GM12878 (cell line): ENCODE measurements at regions of chr22 and their contacts with region 1.

Region 1: GRCh38 chr22:37148742-37149665 is 712 bp downstream of the IL2RB start:
- DNase-seq: no peak
- ATAC-seq: peak; percentile 24
- H3K4me3 ChIP-seq: peak overlapping the region; percentile 99
- H3K27ac ChIP-seq: peak overlapping the region; percentile 94
- H3K4me1 ChIP-seq: peaks cover 31% of the 10 kb centered on the region
- H3K27me3 ChIP-seq: no peaks in the 10 kb centered on the region
- CTCF ChIP-seq: no peak
- EP300 ChIP-seq: no peak
- POLR2A ChIP-seq: no peak
- RAD21 ChIP-seq: no peak

Region 2: DNA sequence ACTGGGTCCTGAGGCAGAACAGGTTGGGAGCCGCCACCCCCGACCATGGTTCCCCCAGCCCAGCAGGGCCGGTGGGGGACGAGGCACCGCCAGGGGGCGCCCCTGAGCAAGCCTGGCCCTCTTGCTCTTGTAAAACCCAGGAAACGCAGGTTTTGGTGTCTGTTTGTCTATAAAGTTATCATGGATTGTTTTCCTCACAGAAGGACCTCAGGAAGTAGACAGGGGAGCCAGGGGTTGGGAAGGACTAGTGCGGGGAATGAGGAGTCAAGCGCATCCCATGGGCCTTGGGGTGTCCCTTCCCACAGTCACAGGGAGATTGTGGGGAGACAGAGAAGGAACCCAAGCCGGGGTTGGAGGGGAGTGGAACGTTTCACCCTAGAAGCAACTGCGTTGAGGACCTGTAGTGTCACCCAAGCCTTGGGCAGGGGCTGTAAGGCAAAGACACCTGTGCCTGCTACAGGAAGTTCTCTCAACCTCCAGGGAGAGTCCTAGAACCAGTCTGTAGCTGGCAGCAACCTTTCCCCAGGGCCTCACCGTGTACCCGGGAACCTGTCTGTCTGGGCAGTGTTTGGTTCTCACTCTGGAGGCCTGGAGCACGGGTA is 71.0 kb before region 1 on chr22:
- CTCF ChIA-PET with region 1: interaction called, 8 read pairs
- POLR2A ChIA-PET with region 1: no interaction called
- RAD21 ChIA-PET with region 1: interaction called, 7 read pairs
- SMC1A ChIA-PET with region 1: interaction called, 6 read pairs
- in situ Hi-C with region 1: no loop called
- intact Hi-C with region 1: loop called (anchors 5 kb)
- DNase-seq: no peak
- ATAC-seq: peak; percentile 91
- H3K4me3 ChIP-seq: no peak overlapping the region
- H3K27ac ChIP-seq: no peak overlapping the region
- H3K4me1 ChIP-seq: peaks cover 10% of the 10 kb centered on the region
- H3K27me3 ChIP-seq: peaks cover 0 to 3% of the 10 kb centered on the region in 2 experiments; a peak in 2 of 4 replicates
- CTCF ChIP-seq: peak; percentile 96 to 99 (median 98)
- EP300 ChIP-seq: no peak
- POLR2A ChIP-seq: no peak
- RAD21 ChIP-seq: peak; percentile 85

Region 3: GRCh38 chr22:37121887-37122591 is 27.0 kb before region 1 on chr22:
- CTCF ChIA-PET with region 1: interaction called, 50 read pairs
- POLR2A ChIA-PET with region 1: interaction called, 8 read pairs
- RAD21 ChIA-PET with region 1: interaction called, 40 read pairs
- SMC1A ChIA-PET with region 1: interaction called, 45 read pairs
- in situ Hi-C with region 1: no loop called
- intact Hi-C with region 1: no loop called
- DNase-seq: peak; percentile 73
- ATAC-seq: peak; percentile 95
- H3K4me3 ChIP-seq: no peak overlapping the region
- H3K27ac ChIP-seq: peak overlapping the region; percentile 38
- H3K4me1 ChIP-seq: peaks cover 21% of the 10 kb centered on the region
- H3K27me3 ChIP-seq: no peaks in the 10 kb centered on the region
- CTCF ChIP-seq: peak in 2 of 3 experiments; percentile 9 to 16; a peak in 1 of 6 replicates
- EP300 ChIP-seq: no peak; a peak in 1 of 4 replicates
- POLR2A ChIP-seq: peak; percentile 74
- RAD21 ChIP-seq: 0 out of 2 replicates have a peak, but pooled peaks have one; percentile 24

Region 4: DNA sequence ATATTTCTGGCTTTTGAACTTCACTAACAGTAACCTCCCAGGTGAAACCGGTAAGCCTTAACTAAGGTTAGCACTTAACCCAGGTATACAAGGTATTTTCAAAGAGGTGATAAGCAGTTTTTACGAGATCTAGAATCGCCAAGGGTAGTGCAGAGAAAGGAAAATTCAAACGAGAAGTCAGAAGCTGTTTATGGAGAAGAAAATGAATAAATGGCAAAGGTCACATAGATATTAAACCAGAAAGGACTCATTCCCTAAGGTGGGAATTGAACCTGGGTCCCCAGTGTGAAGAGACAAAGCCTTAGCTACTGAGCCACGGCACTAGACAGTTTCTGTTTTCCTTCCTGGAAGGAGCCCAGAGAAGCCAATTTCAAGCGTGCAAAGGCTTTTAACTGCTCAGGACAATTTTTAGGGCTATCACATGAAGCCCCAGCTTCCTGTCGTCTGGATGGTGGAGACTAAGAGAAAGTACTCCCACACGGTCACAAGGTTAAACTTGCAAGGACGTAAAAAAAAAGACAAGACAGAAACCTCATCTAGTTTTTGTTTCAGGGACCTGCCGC is 44.7 kb after region 1 on chr22:
- CTCF ChIA-PET with region 1: interaction called, 30 read pairs
- POLR2A ChIA-PET with region 1: interaction called, 7 read pairs
- RAD21 ChIA-PET with region 1: interaction called, 23 read pairs
- SMC1A ChIA-PET with region 1: interaction called, 16 read pairs
- in situ Hi-C with region 1: no loop called
- intact Hi-C with region 1: loop called (anchors 10 kb)
- DNase-seq: no peak
- ATAC-seq: peak; percentile 34
- H3K4me3 ChIP-seq: no peak overlapping the region
- H3K27ac ChIP-seq: peak overlapping the region; percentile 49
- H3K4me1 ChIP-seq: peaks cover 18% of the 10 kb centered on the region
- H3K27me3 ChIP-seq: no peaks in the 10 kb centered on the region
- CTCF ChIP-seq: no peak
- EP300 ChIP-seq: peak in 1 of 2 experiments; percentile 57; a peak in 1 of 4 replicates
- POLR2A ChIP-seq: no peak
- RAD21 ChIP-seq: no peak